Common myeloid progenitor, CD34-positive (primary cell): ENCODE measurements at regions of chr14 and their contacts with region 1.

Region 1: GRCh38 chr14:106506881-106507305 is 980.5 kb downstream of the TMEM121 start:
- DNase-seq: peak in 2 of 3 donors; percentile 58 to 71
- H3K4me3 ChIP-seq: no peak overlapping the region
- H3K27ac ChIP-seq: no peak overlapping the region
- H3K4me1 ChIP-seq: peaks cover 0 to 21% (median 12%) of the 10 kb centered on the region in 4 experiments
- H3K27me3 ChIP-seq: peaks cover 0 to 17% (median 2%) of the 10 kb centered on the region in 5 experiments

Region 2: DNA sequence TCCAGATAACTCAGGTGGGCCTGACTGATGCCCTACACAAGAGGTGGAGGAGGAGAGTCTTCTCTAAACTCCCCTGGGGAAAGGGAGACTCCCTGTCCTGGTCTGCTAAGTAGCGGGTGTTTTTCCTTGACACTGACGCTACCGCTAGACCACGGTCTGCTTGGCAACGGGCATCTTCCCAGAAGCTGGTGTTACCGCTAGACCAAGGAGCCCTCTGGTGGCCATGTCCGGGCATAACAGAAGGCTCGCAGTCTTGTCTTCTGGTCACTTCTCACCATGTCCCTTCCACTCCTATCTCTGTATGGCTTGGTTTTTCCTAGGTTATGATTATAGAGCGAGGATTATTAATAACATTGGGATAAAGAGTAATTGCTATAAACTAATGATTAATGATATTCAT is 15.0 kb before region 1 on chr14:
- CTCF ChIA-PET with region 1: interaction called, 45 read pairs
- POLR2A ChIA-PET with region 1: interaction called, 4 read pairs
- DNase-seq: peak in 1 of 3 donors; percentile 5
- H3K4me3 ChIP-seq: no peak overlapping the region
- H3K27ac ChIP-seq: no peak overlapping the region
- H3K4me1 ChIP-seq: peaks cover 2 to 12% (median 6%) of the 10 kb centered on the region in 4 experiments
- H3K27me3 ChIP-seq: peaks cover 0 to 5% (median 0%) of the 10 kb centered on the region in 5 experiments

Region 3: GRCh38 chr14:106518054-106518943 is 11.4 kb after region 1 on chr14:
- CTCF ChIA-PET with region 1: interaction called, 12 read pairs
- POLR2A ChIA-PET with region 1: no interaction called
- DNase-seq: peak; percentile 76 to 87 (median 86)
- H3K4me3 ChIP-seq: no peak overlapping the region
- H3K27ac ChIP-seq: no peak overlapping the region
- H3K4me1 ChIP-seq: peaks cover 6 to 17% (median 13%) of the 10 kb centered on the region in 4 experiments
- H3K27me3 ChIP-seq: peaks cover 0 to 42% (median 2%) of the 10 kb centered on the region in 5 experiments

Region 4: DNA sequence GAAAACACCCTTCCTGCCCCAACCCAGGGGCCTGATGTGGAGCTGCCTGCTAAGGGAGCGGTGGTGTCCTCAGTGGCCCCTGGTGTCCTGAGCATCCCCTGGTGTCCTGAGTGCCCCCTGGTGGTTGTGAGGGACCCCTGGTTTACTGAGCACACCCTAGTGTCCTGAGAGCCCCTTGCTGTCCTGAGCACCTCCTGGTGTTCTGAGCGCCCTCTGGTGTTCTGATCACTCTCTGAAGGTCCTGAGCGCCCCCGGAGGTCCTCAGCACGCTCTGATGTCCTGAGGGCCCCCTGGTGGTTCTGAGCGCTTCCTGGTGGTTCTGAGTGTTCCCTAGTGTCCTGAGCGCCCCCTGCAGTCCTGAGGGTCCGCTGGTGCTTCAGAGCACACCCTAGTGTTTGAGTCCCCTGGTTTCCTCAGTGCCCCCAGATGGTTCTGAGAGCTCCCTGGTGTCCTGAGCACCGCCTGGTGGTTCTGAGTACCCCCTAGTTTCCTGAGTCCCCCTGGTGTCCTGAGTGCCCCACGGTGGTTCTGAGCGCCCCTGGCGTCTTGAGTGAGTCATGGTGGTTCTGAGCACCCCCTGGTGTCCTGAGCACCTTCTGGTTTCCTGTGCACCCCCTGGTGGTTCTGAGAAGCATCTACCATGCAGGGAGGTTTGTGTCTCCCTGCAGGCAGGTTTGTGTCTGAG is 23.7 kb after region 1 on chr14:
- CTCF ChIA-PET with region 1: interaction called, 21 read pairs
- POLR2A ChIA-PET with region 1: no interaction called
- DNase-seq: peak; percentile 59 to 75 (median 75)
- H3K4me3 ChIP-seq: no peak overlapping the region
- H3K27ac ChIP-seq: no peak overlapping the region
- H3K4me1 ChIP-seq: no peaks in the 10 kb centered on the region
- H3K27me3 ChIP-seq: peaks cover 0 to 21% (median 0%) of the 10 kb centered on the region in 5 experiments